Heart left ventricle (tissue), 16 donors: ENCODE measurements at regions of chr14 and their contacts with region 1.

Region 1: GRCh38 chr14:94110552-94111181 is at the start of gene IFI27:
- DNase-seq: peak in 4 of 5 donors; percentile 74 to 84 (median 80)
- ATAC-seq: peak; percentile 25 to 84 (median 72)
- H3K4me3 ChIP-seq: peak within 1 kb of the TSS; percentile 38 to 81 (median 64)
- H3K27ac ChIP-seq: peak within 1 kb of the TSS; percentile 71 to 96 (median 92)
- H3K4me1 ChIP-seq: peaks cover 0 to 51% (median 39%) of the 10 kb centered on the region in 12 donors
- H3K27me3 ChIP-seq: no peaks in the 10 kb centered on the region
- CTCF ChIP-seq: no peak
- POLR2A ChIP-seq: peak in 1 of 2 donors; percentile 80
- total RNA-seq, gene IFI27: 135 to 458 (median 177) TPM

Region 2: GRCh38 chr14:94080471-94081289 is 30.0 kb before region 1 on chr14 and contains the start of gene DDX24:
- intact Hi-C with region 1: loop called in 1 of 10 experiments (anchors 2 kb)
- DNase-seq: peak; percentile 96 to 98 (median 98)
- ATAC-seq: peak; percentile 99 to 100 (median 100)
- H3K4me3 ChIP-seq: peak within 1 kb of the TSS; percentile 71 to 100 (median 90)
- H3K27ac ChIP-seq: peak within 1 kb of the TSS; percentile 81 to 95 (median 91)
- H3K4me1 ChIP-seq: peaks cover 12 to 54% (median 42%) of the 10 kb centered on the region in 12 donors
- H3K27me3 ChIP-seq: no peaks in the 10 kb centered on the region
- CTCF ChIP-seq: peak in 1 of 12 donors; percentile 13
- POLR2A ChIP-seq: peak; percentile 89 to 97
- total RNA-seq, gene DDX24: 161 to 268 (median 209) TPM